Right lobe of liver (tissue), 6 donors: ENCODE measurements at regions of chr12 and their contacts with region 1.

Region 1: DNA sequence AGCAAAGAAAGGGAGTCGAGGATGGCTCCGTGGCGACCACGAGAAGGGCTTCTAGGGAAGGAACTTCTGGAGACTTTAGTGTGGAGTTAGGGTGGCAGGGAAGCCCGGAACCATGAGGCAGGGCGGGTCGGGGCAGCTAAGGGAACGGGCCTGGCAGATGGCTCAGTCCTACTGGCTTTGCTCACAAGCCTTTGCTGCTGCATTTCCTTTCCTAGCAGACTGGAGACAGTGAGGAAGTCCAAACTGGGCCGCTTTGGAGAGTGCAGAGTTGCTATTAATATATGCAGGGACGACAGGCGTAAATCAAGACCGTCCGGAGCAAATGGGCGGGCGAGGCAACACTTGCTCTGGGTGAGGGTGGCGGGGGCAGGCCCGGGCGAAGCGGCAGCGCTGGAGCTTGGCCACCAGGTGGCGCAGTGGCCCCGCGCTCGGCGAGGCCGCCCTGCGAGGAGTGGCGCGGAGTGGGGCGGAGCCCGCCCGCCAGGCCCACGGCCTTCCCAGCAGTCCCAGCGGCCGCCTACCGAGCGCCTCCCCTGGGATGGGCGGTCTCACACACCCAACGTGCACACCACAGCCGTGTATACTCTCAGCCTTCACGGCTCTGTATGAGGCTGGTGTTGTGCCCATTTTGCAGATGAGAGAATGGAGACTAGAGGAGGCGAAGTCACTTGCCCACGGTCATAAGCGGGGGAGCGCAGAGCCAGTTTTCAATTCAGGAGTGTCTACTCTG is 24.4 kb upstream of the LRTM2 start:
- DNase-seq: peak; percentile 95 to 96 (median 95)
- ATAC-seq: peak; percentile 89 to 95 (median 92)
- H3K4me3 ChIP-seq: peak overlapping the region; percentile 62 to 81 (median 78)
- H3K27ac ChIP-seq: peak overlapping the region; percentile 67 to 77 (median 70)
- H3K4me1 ChIP-seq: peaks cover 0 to 11% (median 0%) of the 10 kb centered on the region in 4 donors
- H3K27me3 ChIP-seq: no peaks in the 10 kb centered on the region
- CTCF ChIP-seq: peak; percentile 99 to 100 (median 100)
- POLR2A ChIP-seq: peak; percentile 75

Region 2: DNA sequence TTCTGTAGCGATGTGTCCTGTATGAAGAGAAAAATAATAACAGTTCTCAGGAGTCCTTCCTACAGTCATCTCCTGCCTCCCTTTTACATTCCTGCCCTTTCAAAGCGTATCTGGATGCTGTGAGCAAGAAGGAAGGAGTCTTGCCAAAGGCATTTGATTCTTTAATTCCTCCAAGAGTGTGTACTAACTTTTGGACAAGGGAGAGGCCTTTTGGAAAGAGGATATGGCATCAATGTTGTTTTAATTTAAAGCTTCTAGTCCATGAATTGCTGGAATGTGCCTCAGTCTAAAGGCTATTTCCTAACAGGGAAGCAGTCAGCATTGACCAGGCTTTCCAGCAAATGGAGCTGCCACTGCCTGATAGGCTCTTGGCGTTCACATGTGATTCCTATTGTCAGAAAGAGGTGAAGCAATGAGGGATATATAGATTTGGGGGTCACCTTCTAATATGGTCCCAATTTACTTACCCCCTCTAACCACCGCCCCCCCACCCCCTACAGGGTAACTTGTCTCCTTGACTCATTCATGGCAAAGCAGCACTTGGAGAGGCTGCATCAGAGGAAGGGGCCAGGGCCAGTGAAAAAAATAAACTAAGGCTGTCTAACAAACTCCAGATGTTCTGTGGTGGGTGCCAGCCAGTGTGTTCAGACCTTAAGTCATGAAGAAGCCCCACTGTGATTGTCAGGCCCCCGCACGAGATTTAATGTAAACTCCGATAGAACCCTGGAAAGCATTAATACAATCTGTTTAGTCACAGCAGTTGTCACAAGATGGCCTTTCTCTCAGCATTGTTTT is 421.9 kb before region 1 on chr12:
- intact Hi-C with region 1: no loop called
- DNase-seq: no peak
- ATAC-seq: no peak
- H3K4me3 ChIP-seq: no peak overlapping the region
- H3K27ac ChIP-seq: no peak overlapping the region
- H3K4me1 ChIP-seq: peaks cover 0 to 37% (median 6%) of the 10 kb centered on the region in 4 donors
- H3K27me3 ChIP-seq: no peaks in the 10 kb centered on the region
- CTCF ChIP-seq: no peak
- POLR2A ChIP-seq: no peak

Region 3: GRCh38 chr12:1650260-1650977 is 145.5 kb before region 1 on chr12:
- intact Hi-C with region 1: loop called (anchors 5 kb)
- DNase-seq: no peak
- ATAC-seq: peak in 1 of 4 donors; percentile 29
- H3K4me3 ChIP-seq: no peak overlapping the region
- H3K27ac ChIP-seq: peak overlapping the region in 1 of 3 donors; percentile 14
- H3K4me1 ChIP-seq: peaks cover 0 to 10% (median 0%) of the 10 kb centered on the region in 4 donors
- H3K27me3 ChIP-seq: no peaks in the 10 kb centered on the region
- CTCF ChIP-seq: no peak
- POLR2A ChIP-seq: no peak

Region 4: GRCh38 chr12:1939801-1940607 is 144.1 kb after region 1 on chr12:
- intact Hi-C with region 1: loop called in 1 of 2 experiments (anchors 5 kb)
- DNase-seq: peak; percentile 84 to 87 (median 84)
- ATAC-seq: peak; percentile 80 to 93 (median 85)
- H3K4me3 ChIP-seq: no peak overlapping the region
- H3K27ac ChIP-seq: no peak overlapping the region
- H3K4me1 ChIP-seq: peaks cover 0 to 10% (median 4%) of the 10 kb centered on the region in 4 donors
- H3K27me3 ChIP-seq: no peaks in the 10 kb centered on the region
- CTCF ChIP-seq: peak; percentile 93 to 99 (median 97)
- POLR2A ChIP-seq: no peak

Region 5: GRCh38 chr12:2034633-2035430 is 238.9 kb after region 1 on chr12:
- intact Hi-C with region 1: loop called (anchors 10 kb)
- DNase-seq: peak; percentile 90 to 91 (median 90)
- ATAC-seq: peak; percentile 99 to 100 (median 100)
- H3K4me3 ChIP-seq: peak overlapping the region; percentile 30 to 48 (median 31)
- H3K27ac ChIP-seq: no peak overlapping the region
- H3K4me1 ChIP-seq: peaks cover 0 to 5% (median 0%) of the 10 kb centered on the region in 4 donors
- H3K27me3 ChIP-seq: no peaks in the 10 kb centered on the region
- CTCF ChIP-seq: peak; percentile 96 to 99 (median 96)
- POLR2A ChIP-seq: no peak

Region 6: DNA sequence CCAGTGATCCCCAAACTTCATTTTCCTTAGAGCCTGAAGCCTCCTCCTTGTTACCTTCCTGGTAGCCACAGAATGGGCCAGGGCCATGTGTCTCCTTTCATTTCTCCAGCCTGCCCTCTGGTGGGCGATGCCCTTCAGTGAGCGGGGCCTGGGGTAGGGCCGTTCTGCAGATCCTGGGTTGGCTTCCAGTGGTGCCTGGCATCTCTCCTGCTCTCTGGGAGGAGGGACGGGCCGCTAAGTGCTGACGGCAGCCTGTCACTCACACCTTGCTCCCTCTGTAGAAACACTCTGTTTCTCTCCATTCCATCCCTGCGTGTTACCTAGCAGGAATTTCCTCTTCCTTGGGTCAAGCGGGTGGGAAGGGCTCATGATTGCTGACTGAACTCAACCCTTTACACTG is 488.9 kb after region 1 on chr12:
- intact Hi-C with region 1: loop called in 1 of 2 experiments (anchors 5 kb)
- DNase-seq: peak; percentile 66 to 75 (median 68)
- ATAC-seq: peak; percentile 86 to 94 (median 91)
- H3K4me3 ChIP-seq: no peak overlapping the region
- H3K27ac ChIP-seq: no peak overlapping the region
- H3K4me1 ChIP-seq: no peaks in the 10 kb centered on the region
- H3K27me3 ChIP-seq: no peaks in the 10 kb centered on the region
- CTCF ChIP-seq: peak; percentile 56 to 66 (median 60)
- POLR2A ChIP-seq: no peak